ENCODE measurements at regions of chr2 and their contacts with region 1.

Region 1: GRCh38 chr2:230007931-230008707 is 60.6 kb downstream of the SLC16A14 start:
- DNase-seq: peak; percentile 86
- ATAC-seq: peak; percentile 50

Region 2: GRCh38 chr2:229910832-229911412 is 97.2 kb before region 1 on chr2:
- intact Hi-C with region 1: no loop called
- DNase-seq: no peak
- ATAC-seq: no peak

Region 3: GRCh38 chr2:230160112-230160660 is 152.1 kb after region 1 on chr2:
- intact Hi-C with region 1: loop called (anchors 1 kb)
- DNase-seq: peak; percentile 74
- ATAC-seq: peak; percentile 71

Region 4: GRCh38 chr2:230218421-230218820 is 210.3 kb after region 1 on chr2:
- intact Hi-C with region 1: no loop called
- DNase-seq: no peak
- ATAC-seq: peak; percentile 56